A673 (cell line): ENCODE measurements at regions of chr4 and their contacts with region 1.

Region 1: DNA sequence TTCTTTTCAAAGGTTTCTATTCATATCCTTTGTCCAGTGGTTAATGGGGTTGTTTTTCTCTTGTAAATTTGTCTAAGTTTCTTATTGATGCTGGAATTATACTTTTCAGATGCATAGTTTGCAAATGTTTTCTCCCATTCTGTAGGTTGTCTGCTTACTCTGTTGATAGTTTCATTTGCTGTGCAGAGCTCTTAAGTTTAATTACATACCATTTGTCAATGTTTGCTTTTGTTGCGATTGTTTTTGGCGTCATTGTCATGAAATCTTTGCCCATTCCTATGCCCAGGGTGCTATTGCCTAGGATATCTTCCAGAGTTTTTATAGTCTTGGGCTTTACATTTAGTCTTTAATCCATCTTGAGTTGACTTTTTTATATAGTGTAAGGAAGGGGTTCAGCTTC is 21.2 kb upstream of the UGT8 start:
- DNase-seq: no peak
- H3K4me3 ChIP-seq: no peak overlapping the region
- H3K27ac ChIP-seq: no peak overlapping the region
- H3K4me1 ChIP-seq: no peaks in the 10 kb centered on the region
- H3K27me3 ChIP-seq: no peaks in the 10 kb centered on the region
- CTCF ChIP-seq: no peak

Region 2: DNA sequence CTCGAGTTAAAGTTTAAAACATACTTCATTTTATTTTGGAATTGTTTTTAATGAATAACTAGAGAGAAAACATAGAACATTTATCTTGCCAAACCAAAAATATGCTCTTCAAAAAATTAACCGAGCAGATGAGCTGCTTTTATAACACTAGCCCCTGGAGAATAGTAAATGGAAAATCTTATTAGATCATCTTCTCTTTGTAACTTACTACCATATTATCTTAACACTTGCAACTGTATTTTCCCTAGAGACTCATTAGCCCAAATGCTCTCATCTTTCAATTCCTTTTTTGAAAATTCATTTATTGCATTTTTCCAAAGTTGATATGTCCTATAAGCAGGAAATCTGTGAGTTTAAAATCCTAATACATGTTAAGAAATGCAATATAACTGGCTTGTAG is 959.2 kb before region 1 on chr4:
- CTCF ChIA-PET with region 1: no interaction called
- POLR2A ChIA-PET with region 1: no interaction called
- intact Hi-C with region 1: no loop called
- DNase-seq: peak; percentile 41
- H3K4me3 ChIP-seq: no peak overlapping the region
- H3K27ac ChIP-seq: no peak overlapping the region
- H3K4me1 ChIP-seq: peaks cover 16% of the 10 kb centered on the region
- H3K27me3 ChIP-seq: no peaks in the 10 kb centered on the region
- CTCF ChIP-seq: no peak

Region 3: GRCh38 chr4:114005569-114006442 is 571.6 kb before region 1 on chr4:
- CTCF ChIA-PET with region 1: no interaction called
- POLR2A ChIA-PET with region 1: no interaction called
- intact Hi-C with region 1: no loop called
- DNase-seq: no peak
- H3K4me3 ChIP-seq: no peak overlapping the region
- H3K27ac ChIP-seq: no peak overlapping the region
- H3K4me1 ChIP-seq: peaks cover 9% of the 10 kb centered on the region
- H3K27me3 ChIP-seq: no peaks in the 10 kb centered on the region
- CTCF ChIP-seq: no peak

Region 4: GRCh38 chr4:114597410-114598115 is 20.2 kb after region 1 on chr4:
- CTCF ChIA-PET with region 1: no interaction called
- POLR2A ChIA-PET with region 1: no interaction called
- intact Hi-C with region 1: loop called (anchors 2 kb)
- DNase-seq: no peak
- H3K4me3 ChIP-seq: peak overlapping the region; percentile 53
- H3K27ac ChIP-seq: no peak overlapping the region
- H3K4me1 ChIP-seq: peaks cover 7% of the 10 kb centered on the region
- H3K27me3 ChIP-seq: peaks cover 39% of the 10 kb centered on the region
- CTCF ChIP-seq: no peak